ENCODE measurements at regions of chr6 and their contacts with region 1.

Region 1: GRCh38 chr6:18997375-18997826 is 610.3 kb downstream of the RNF144B start:
- DNase-seq: no peak
- ATAC-seq: peak; percentile 47
- H3K4me3 Mint-ChIP-seq: no peak overlapping the region
- H3K27ac Mint-ChIP-seq: no peak overlapping the region
- H3K4me1 Mint-ChIP-seq: no peaks in the 10 kb centered on the region
- H3K27me3 Mint-ChIP-seq: no peaks in the 10 kb centered on the region

Region 2: GRCh38 chr6:18280079-18280478 is 717.3 kb before region 1 on chr6:
- CTCF ChIA-PET with region 1: no interaction called
- POLR2A ChIA-PET with region 1: no interaction called
- intact Hi-C with region 1: no loop called
- DNase-seq: no peak
- ATAC-seq: no peak
- H3K4me3 Mint-ChIP-seq: no peak overlapping the region
- H3K27ac Mint-ChIP-seq: no peak overlapping the region
- H3K4me1 Mint-ChIP-seq: peaks cover 4% of the 10 kb centered on the region
- H3K27me3 Mint-ChIP-seq: peaks cover 43% of the 10 kb centered on the region

Region 3: DNA sequence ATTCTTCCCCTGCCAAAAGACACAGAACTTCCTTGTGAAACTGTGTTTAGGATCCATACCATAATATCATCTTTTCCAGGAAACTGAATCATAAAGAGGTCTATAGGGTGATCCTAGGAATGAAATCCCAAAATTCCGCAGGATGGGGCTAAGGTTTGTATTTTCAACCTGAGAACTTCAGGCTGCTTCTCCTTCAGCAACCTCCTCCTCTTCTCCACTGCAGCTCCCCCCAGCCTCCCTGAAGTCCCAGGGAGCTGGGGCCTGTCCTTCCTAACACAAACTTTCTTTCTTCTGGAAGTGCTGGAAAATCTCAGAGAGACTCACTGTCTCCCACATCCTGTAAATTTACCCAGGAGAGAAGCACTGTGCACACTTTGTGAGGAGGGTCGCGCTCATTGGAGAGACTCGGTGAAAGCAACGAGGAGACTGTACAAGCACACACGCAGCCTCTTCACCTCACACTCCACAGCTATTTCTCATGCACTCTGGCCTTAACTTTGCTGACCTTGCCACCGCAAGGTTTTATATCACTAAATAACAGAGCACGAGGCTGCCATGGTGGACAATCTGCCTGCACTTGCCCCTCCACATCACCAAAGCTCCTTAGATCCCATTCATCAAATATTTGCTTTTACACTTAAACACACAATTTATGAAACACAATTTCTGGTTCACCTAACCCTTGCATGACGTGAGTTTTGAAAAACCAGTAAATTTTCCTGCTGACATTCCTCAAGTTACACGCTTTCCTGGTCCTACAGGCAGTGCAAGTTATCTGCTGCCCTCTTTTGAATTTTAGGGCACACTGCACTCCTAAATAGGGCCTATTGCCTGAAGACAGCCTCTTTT is 854.1 kb after region 1 on chr6:
- CTCF ChIA-PET with region 1: no interaction called
- POLR2A ChIA-PET with region 1: no interaction called
- intact Hi-C with region 1: loop called in 1 of 2 experiments (anchors 5 kb)
- DNase-seq: no peak
- ATAC-seq: no peak
- H3K4me3 Mint-ChIP-seq: no peak overlapping the region
- H3K27ac Mint-ChIP-seq: no peak overlapping the region
- H3K4me1 Mint-ChIP-seq: no peaks in the 10 kb centered on the region
- H3K27me3 Mint-ChIP-seq: peaks cover 2% of the 10 kb centered on the region

Measured in activated CD4-positive, alpha-beta T cell treated with anti-CD3 and anti-CD28 coated beads for 36 hours (primary cell).